Vagina (tissue), 2 donors: ENCODE measurements at regions of chr17 and their contacts with region 1.

Region 1: DNA sequence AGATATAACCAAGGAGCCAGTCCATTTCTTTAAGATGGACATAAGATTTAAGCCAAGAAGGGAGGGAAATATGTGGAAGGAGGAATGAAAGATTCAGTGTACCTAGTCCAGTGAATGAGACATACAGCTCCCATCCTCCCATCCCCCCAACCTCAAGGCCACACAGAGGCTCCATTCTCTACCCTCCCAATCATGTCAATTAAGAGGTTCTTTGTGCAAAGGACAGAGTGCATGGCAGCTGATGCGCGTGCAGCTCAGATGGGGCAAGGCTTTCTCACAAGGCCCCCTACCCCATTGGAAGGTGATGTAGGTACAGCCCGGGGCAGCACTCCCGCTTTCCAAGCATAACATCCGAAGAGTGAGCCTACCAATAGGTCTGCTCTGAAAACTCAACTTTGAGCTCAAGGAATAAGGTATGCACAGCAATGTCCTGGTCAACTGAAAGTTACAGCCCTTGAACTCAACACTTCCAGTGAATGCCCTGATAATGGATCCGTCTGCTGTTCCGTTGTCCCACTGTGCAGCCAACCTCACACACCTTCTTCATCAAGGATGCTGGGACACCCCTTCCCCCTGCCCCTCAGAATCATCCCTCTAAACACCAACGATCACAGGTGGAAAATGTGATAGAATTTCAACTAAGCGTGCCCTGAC is 458.1 kb downstream of the SOX9 start:
- DNase-seq: no peak
- H3K4me3 ChIP-seq: no peak overlapping the region
- H3K27ac ChIP-seq: no peak overlapping the region
- H3K4me1 ChIP-seq: no peaks in the 10 kb centered on the region
- H3K27me3 ChIP-seq: no peaks in the 10 kb centered on the region
- CTCF ChIP-seq: no peak
- POLR2A ChIP-seq: no peak

Region 2: GRCh38 chr17:72510397-72511016 is 68.4 kb before region 1 on chr17:
- intact Hi-C with region 1: no loop called
- DNase-seq: no peak
- H3K4me3 ChIP-seq: no peak overlapping the region
- H3K27ac ChIP-seq: no peak overlapping the region
- H3K4me1 ChIP-seq: no peaks in the 10 kb centered on the region
- H3K27me3 ChIP-seq: no peaks in the 10 kb centered on the region
- CTCF ChIP-seq: no peak
- POLR2A ChIP-seq: no peak

Region 3: DNA sequence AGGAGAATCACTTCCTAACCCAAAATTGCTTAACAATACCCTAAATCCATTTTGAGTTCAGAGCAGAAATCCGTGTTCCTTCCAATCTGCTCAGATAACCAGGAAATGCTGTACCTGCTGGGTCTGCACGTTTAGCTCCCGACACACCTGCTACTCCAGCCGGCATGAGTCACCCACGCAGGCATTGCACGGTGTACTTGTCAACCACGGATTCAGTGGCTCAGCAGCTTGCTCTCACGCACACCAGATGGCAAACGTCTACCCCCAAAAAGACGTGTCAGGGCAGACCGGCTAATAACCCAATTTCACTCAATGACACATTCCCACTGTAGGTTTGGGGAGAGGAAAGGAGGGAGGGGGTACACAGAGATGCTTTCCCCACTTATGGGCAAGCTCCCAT is 10.0 kb after region 1 on chr17:
- intact Hi-C with region 1: loop called (anchors 1 kb)
- DNase-seq: no peak
- H3K4me3 ChIP-seq: no peak overlapping the region
- H3K27ac ChIP-seq: peak overlapping the region; percentile 4
- H3K4me1 ChIP-seq: peaks cover 22% of the 10 kb centered on the region
- H3K27me3 ChIP-seq: no peaks in the 10 kb centered on the region
- CTCF ChIP-seq: no peak
- POLR2A ChIP-seq: no peak